AG04449 (cell line): ENCODE measurements at regions of chr5 and their contacts with region 1.

Region 1: GRCh38 chr5:88680253-88681132 is 202.5 kb downstream of the MEF2C start:
- DNase-seq: no peak
- H3K4me3 ChIP-seq: peak overlapping the region; percentile 48
- CTCF ChIP-seq: peak; percentile 93

Region 2: DNA sequence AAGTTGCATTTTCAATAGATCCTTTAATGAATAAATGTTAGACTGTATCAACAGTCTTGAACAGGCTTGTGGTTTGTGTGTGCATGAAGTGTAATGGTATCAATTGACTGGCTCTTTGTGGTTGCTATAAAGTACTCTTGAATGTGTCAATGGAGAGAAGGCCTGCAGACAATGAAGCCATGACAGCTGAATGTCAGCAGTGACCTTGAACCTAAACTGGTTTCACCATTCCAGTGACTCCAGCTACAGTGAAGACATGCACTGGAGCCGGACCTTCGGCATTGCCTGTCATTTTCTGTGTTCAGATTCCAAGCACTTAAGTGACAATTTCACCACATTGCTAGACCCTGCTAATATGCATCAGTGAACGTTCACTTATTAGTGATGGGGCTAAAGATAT is 135.8 kb before region 1 on chr5:
- CTCF ChIA-PET with region 1: no interaction called
- POLR2A ChIA-PET with region 1: no interaction called
- DNase-seq: no peak
- H3K4me3 ChIP-seq: no peak overlapping the region
- CTCF ChIP-seq: no peak

Region 3: DNA sequence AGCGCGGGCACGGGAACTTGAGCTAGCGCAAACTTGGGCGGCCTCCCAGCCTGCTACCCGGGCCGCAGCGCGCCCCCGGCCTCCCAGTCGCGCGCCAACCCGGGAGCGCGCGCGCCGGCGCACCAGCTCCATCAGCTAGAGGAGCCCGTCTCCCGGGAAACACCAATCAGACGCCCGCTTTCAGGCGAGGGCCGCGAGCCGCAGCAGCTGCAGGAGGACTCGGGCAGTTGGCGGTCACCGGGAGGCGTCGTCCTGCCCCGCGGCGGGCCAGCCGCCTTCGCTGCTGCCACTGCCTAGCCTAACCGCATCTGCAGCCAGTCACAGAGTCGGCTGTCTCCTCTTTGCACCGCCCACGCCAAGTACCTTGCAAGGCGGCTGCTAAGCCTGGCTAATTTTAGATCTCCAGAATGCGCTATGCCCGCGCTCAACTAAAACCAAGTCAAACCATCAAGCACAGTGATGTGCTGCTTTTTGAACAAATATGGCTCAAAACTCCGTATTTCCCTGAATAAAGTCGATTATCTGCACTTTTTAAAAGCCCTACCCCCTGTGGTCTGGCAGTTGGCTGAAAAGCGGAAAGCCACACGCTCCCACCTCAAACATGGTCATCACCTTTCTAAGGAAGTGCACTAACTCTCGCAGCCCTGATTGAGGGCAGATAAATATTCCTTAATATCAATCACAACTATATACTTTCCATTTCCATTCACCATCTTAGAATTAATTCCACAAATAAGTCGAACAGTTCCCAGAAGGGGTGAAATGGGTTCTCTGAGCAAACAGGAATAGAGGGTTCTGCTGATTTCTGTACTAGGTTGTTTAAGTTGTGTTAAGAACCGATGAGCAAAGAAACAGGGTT is 19.3 kb before region 1 on chr5:
- CTCF ChIA-PET with region 1: interaction called, 17 read pairs
- POLR2A ChIA-PET with region 1: no interaction called
- DNase-seq: no peak
- H3K4me3 ChIP-seq: peak overlapping the region; percentile 56
- CTCF ChIP-seq: no peak